SK-N-SH (cell line): ENCODE measurements at regions of chr19 and their contacts with region 1.

Region 1: DNA sequence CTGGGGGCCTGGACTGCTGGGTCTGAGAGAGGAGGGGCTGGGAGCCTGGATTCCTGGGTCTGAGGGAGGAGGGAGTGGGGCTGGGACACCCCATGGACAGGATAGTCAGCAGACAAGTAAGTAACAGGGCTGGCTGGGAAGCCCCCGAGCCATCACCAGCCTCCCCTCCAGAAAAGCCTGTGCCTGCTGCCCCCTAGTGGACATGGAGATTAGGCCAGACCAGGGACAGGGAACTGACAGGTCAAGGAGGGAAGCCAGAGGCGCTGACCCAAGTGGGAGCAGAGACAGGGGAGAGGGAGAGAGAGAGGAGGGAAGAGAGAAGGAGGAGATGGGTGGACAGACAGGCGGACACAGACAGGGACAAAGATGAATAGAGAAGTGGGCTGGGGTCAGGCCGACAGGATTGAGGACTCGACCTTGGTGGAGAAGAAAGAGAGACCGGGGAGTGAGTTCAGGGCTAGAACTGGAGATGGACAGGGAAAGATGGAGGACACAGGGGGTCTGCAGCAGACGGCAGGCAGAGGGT is 6.7 kb upstream of the ERFL start:
- DNase-seq: peak; percentile 93
- H3K4me3 ChIP-seq: no peak overlapping the region; a peak in 1 of 4 replicates
- H3K27ac ChIP-seq: no peak overlapping the region
- H3K4me1 ChIP-seq: peaks cover 0 to 11% of the 10 kb centered on the region in 2 experiments; a peak in 2 of 4 replicates
- H3K27me3 ChIP-seq: peaks cover 13% of the 10 kb centered on the region
- CTCF ChIP-seq: peak; percentile 90
- EP300 ChIP-seq: no peak
- RAD21 ChIP-seq: peak; percentile 76

Region 2: GRCh38 chr19:41951686-41952172 is 16.8 kb after region 1 on chr19:
- CTCF ChIA-PET with region 1: interaction called, 15 read pairs
- POLR2A ChIA-PET with region 1: no interaction called
- DNase-seq: peak; percentile 90
- H3K4me3 ChIP-seq: no peak overlapping the region; a peak in 1 of 4 replicates
- H3K27ac ChIP-seq: no peak overlapping the region
- H3K4me1 ChIP-seq: peaks cover 0 to 2% of the 10 kb centered on the region in 2 experiments; a peak in 1 of 4 replicates
- H3K27me3 ChIP-seq: no peaks in the 10 kb centered on the region
- CTCF ChIP-seq: peak; percentile 94
- EP300 ChIP-seq: no peak
- RAD21 ChIP-seq: peak; percentile 82